Left cardiac atrium (tissue), 4 donors: ENCODE measurements at regions of chr5 and their contacts with region 1.

Region 1: GRCh38 chr5:127030259-127031146 is at the start of gene MARCHF3:
- DNase-seq: peak; percentile 96
- ATAC-seq: peak; percentile 99
- total RNA-seq, gene MARCHF3: 17.4 to 23.8 TPM

Region 2: GRCh38 chr5:126917918-126918614 is 112.4 kb before region 1 on chr5:
- intact Hi-C with region 1: loop called in 1 of 2 experiments (anchors 5 kb)
- DNase-seq: no peak
- ATAC-seq: no peak

Region 3: DNA sequence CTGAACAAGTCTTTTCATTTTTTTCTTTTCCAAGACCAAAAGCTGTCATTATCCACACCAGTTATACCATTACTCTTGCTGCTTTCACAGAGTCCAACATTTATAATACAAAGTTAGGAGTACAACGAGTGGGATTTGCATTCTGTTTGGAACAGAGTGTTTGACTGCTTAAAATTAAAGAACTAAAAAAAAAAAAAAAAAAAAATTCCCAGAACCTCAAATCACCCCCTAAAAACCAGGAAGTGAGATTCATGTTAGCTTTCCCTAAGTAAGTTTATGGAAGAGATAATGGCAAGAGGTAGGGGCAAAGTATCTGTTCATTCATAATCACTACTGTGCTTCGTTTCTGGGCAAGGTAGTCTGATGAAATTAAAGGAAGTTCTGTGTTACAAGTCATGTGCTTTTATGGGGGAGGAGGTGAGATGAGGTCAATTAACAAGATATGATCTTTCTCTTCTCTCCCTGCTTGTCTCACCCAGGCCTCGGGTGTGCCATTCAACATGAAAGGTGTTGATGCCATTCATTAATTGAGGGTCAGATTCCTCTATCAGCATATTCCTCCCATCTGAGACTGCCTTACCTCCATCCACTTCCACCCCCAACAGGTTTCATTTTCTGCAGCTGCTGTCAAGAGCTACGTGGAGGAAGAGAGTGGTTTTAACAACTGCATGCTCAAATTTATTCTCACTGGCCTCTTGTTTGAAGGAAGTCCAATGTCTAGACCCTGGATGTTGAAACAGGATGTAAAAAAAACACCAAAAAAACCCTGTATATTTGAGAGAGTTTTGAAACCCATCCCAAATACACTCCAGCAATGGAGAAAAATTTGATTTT is 58.2 kb before region 1 on chr5:
- intact Hi-C with region 1: loop called in 1 of 2 experiments (anchors 10 kb)
- DNase-seq: no peak
- ATAC-seq: peak; percentile 35 to 58